Calu3 (cell line): ENCODE measurements at regions of chr12 and their contacts with region 1.

Region 1: GRCh38 chr12:105644770-105645169 is 314.3 kb downstream of the C12orf75 start:
- DNase-seq: no peak
- H3K4me3 Mint-ChIP-seq: no peak overlapping the region
- H3K27ac Mint-ChIP-seq: no peak overlapping the region
- H3K4me1 Mint-ChIP-seq: no peaks in the 10 kb centered on the region
- H3K27me3 Mint-ChIP-seq: peaks cover 44% of the 10 kb centered on the region
- CTCF ChIP-seq: no peak

Region 2: DNA sequence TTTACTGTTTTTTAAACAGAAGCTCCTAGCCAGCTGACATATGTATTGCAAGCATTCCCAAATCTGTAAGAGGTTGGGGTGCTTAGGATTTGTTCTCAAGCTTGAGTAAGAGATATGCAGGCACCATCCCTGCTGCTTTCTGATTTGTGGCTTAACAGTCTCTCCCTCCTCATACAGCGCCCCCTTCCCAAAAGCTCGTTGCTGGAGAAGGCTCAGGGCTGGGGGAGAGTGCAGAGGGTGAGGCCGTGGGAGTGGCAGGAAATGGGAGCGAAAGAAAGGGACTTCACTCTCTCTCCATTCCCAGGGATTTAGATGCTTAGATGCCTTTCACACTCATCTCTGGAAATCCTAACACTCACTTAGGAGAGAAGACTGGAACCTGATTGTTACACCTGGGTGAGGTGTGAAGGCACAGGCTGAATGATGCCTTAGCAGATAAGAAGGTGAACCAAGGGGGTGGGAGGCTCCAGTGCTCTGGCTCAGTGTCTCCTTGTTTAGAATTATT is 142.3 kb before region 1 on chr12:
- CTCF ChIA-PET with region 1: interaction called, 10 read pairs
- intact Hi-C with region 1: no loop called
- DNase-seq: no peak
- H3K4me3 Mint-ChIP-seq: no peak overlapping the region
- H3K27ac Mint-ChIP-seq: no peak overlapping the region
- H3K4me1 Mint-ChIP-seq: no peaks in the 10 kb centered on the region
- H3K27me3 Mint-ChIP-seq: peaks cover 25% of the 10 kb centered on the region
- CTCF ChIP-seq: no peak

Region 3: GRCh38 chr12:105659355-105660075 is 14.7 kb after region 1 on chr12:
- CTCF ChIA-PET with region 1: no interaction called
- intact Hi-C with region 1: no loop called
- DNase-seq: no peak
- H3K4me3 Mint-ChIP-seq: no peak overlapping the region
- H3K27ac Mint-ChIP-seq: no peak overlapping the region
- H3K4me1 Mint-ChIP-seq: no peaks in the 10 kb centered on the region
- H3K27me3 Mint-ChIP-seq: peaks cover 13% of the 10 kb centered on the region
- CTCF ChIP-seq: no peak

Region 4: DNA sequence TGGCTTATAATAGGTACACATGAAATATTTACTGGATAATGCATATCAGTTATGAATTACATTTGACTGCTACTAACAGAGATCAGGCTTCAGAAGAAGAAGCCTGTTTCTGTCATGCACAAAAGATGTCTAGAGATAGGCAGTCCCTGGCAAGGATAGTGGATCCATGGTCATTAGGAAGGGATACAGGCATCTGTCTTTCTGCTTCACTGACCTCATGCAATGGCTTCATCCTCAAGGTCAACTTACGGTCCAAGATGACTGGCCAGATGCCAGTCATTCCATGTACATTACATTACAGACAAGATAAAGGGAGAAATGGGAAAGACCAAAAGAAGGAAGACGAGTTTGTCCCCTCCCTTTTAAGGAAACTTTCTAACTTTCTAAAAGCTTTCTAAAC is 400.0 kb after region 1 on chr12:
- CTCF ChIA-PET with region 1: no interaction called
- intact Hi-C with region 1: no loop called
- DNase-seq: no peak
- H3K4me3 Mint-ChIP-seq: no peak overlapping the region
- H3K27ac Mint-ChIP-seq: no peak overlapping the region
- H3K4me1 Mint-ChIP-seq: no peaks in the 10 kb centered on the region
- H3K27me3 Mint-ChIP-seq: peaks cover 21% of the 10 kb centered on the region
- CTCF ChIP-seq: no peak